Posterior vena cava (tissue), 2 donors: ENCODE measurements at regions of chr19 and their contacts with region 1.

Region 1: DNA sequence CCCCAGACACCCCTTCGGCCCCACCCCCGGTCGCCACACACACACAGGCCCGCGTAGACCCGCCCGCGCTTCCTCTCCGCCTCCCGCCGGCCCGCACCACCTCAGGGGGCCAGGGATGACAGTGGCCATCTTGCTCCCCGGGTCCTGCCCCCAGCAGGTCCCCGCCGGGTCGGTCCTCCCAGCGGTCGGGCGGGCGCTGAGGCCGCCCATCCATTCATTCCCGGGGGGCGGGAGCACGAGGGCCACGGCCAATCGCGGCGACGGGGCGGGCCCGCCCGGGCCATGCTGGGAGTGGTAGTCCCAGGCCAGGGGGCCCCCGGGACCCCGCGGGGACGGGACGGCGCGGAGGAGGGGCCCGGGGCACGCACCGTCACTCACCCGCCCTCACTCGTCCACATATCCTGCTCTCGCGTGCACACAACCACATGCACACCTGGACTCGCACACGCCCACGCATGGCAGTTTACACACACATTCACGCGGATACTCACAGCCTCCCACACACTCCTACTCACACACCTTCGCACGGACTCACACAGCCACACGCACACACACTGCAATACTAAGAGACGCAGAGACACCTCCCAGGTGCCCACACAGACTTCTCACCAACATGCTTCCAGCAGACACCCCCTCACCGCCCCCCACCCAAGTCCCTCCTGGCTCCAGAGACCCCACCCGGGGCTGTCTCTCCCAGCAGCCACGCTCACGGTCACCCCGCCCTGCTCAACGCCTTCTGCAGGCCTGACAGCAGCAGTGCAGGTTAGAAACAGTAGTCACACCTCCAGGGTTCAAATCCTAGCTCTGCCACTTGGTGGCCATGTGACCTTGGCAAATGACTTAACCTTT is at the start of gene DPF1:
- DNase-seq: no peak
- total RNA-seq, gene DPF1: 0.14 to 0.65 TPM

Region 2: DNA sequence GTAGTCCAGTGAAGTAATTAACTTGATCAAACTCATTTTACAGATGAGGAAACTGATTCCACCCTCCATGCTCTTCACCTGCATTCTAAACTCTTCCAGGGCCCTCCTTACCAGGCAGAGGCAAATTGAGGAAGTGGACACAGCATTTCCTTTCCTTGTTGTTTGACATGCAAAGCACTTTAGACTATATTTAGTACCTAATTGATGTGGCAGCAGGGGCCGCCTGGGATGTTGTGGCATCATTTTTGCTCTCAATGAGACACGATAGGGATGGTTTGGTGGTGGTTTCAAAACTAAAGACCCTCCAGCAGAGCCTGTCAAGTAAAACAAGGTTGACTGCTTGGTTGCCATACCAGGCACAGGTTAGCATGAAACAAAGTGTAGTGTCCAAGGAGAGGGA is 309.3 kb before region 1 on chr19:
- intact Hi-C with region 1: loop called in 1 of 2 experiments (anchors 10 kb)
- DNase-seq: no peak